ENCODE measurements at regions of chr11 and their contacts with region 1.

Region 1: GRCh38 chr11:107457558-107458271 is at the start of gene CWF19L2:
- DNase-seq: peak; percentile 94
- ATAC-seq: peak; percentile 96
- H3K4me3 ChIP-seq: peak within 1 kb of the TSS; percentile 65 to 99 (median 94)
- H3K4me3 Mint-ChIP-seq: peak within 1 kb of the TSS; percentile 94
- H3K27ac ChIP-seq: peak within 1 kb of the TSS; percentile 64 to 88
- H3K27ac Mint-ChIP-seq: peak within 1 kb of the TSS; percentile 93
- H3K4me1 ChIP-seq: peaks cover 12 to 14% of the 10 kb centered on the region in 2 donors
- H3K4me1 Mint-ChIP-seq: peaks cover 27% of the 10 kb centered on the region
- H3K27me3 ChIP-seq: no peaks in the 10 kb centered on the region
- H3K27me3 Mint-ChIP-seq: peaks cover 5% of the 10 kb centered on the region
- CTCF ChIP-seq: no peak
- total RNA-seq, gene CWF19L2: 44.3 and 44.6 TPM in 2 replicates

Region 2: GRCh38 chr11:106076919-106077608 is 1380.7 kb before region 1 on chr11 and contains the start of gene KBTBD3:
- CTCF ChIA-PET with region 1: no interaction called
- POLR2A ChIA-PET with region 1: no interaction called
- intact Hi-C with region 1: loop called (anchors 1 kb)
- DNase-seq: peak; percentile 99
- ATAC-seq: peak; percentile 91
- H3K4me3 ChIP-seq: peak within 1 kb of the TSS; percentile 72 to 96 (median 77)
- H3K4me3 Mint-ChIP-seq: peak within 1 kb of the TSS; percentile 100
- H3K27ac ChIP-seq: peak within 1 kb of the TSS; percentile 92 to 93
- H3K27ac Mint-ChIP-seq: peak within 1 kb of the TSS; percentile 99
- H3K4me1 ChIP-seq: peaks cover 12 to 23% of the 10 kb centered on the region in 2 donors
- H3K4me1 Mint-ChIP-seq: peaks cover 48% of the 10 kb centered on the region
- H3K27me3 ChIP-seq: no peaks in the 10 kb centered on the region
- H3K27me3 Mint-ChIP-seq: no peaks in the 10 kb centered on the region
- CTCF ChIP-seq: peak; percentile 73
- total RNA-seq, gene KBTBD3: 15.5 and 18.3 TPM in 2 replicates

Region 3: DNA sequence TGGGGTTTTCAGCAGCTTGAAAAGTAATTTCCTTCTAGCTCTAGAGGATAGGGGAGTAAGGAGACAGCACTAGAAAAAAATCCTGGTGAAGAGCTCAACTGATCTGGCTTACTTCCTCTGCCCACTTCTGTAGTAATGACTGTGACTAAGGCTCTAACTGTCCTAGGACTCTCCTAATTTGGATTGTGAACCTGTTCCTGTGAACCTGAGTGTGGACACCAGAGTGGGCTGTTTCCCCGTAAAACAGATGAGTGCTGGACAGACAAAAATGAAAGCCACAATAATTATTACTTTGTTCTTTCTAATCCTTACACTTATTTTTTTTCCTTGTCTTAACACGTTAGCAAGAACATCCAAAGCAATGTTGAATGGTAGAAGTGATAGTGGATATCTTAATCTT is 1226.1 kb before region 1 on chr11:
- CTCF ChIA-PET with region 1: no interaction called
- POLR2A ChIA-PET with region 1: no interaction called
- intact Hi-C with region 1: no loop called
- DNase-seq: no peak
- ATAC-seq: no peak
- H3K4me3 ChIP-seq: no peak overlapping the region
- H3K4me3 Mint-ChIP-seq: no peak overlapping the region
- H3K27ac ChIP-seq: no peak overlapping the region
- H3K27ac Mint-ChIP-seq: no peak overlapping the region
- H3K4me1 ChIP-seq: no peaks in the 10 kb centered on the region
- H3K4me1 Mint-ChIP-seq: no peaks in the 10 kb centered on the region
- H3K27me3 ChIP-seq: no peaks in the 10 kb centered on the region
- H3K27me3 Mint-ChIP-seq: no peaks in the 10 kb centered on the region
- CTCF ChIP-seq: no peak

Region 4: DNA sequence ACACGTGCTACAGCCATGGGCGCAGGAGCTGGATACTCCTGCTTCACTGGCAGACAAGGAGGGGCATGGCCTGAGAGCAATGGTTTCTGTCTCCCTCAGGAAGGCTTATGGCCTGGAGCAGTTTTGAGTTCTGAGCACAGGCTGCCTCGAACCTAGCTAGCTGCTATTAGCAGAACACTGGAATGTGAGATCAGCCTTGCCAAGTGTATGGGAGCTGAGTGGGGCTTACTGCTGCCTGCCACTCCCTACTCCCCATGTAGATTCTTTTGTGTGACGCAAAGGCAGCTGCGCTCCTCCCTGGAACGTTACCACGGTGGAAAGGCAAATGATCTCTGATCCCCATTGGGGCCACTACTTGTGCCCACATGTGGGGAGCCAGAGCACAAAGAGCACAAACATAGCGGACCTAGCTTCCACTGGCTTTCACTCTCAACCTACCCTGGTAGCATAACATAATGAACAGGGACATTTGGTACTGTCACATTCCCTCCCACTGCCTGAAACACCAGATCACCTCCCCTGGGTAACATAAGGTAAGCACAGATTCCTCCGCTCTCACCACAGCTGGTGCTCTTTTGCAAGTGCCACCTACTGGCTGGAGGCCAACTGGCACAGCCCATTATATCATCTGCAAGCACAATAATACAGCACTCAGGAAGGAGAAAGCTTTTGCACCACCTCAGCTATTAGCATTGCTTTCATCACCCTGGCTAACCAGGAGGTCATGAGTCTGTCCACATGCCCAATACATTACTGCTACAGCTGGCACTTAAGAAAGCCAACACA is 354.8 kb before region 1 on chr11:
- CTCF ChIA-PET with region 1: no interaction called
- POLR2A ChIA-PET with region 1: no interaction called
- intact Hi-C with region 1: no loop called
- DNase-seq: no peak
- ATAC-seq: no peak
- H3K4me3 ChIP-seq: no peak overlapping the region
- H3K4me3 Mint-ChIP-seq: no peak overlapping the region
- H3K27ac ChIP-seq: no peak overlapping the region
- H3K27ac Mint-ChIP-seq: no peak overlapping the region
- H3K4me1 ChIP-seq: no peaks in the 10 kb centered on the region
- H3K4me1 Mint-ChIP-seq: no peaks in the 10 kb centered on the region
- H3K27me3 ChIP-seq: no peaks in the 10 kb centered on the region
- H3K27me3 Mint-ChIP-seq: no peaks in the 10 kb centered on the region
- CTCF ChIP-seq: no peak

Region 5: DNA sequence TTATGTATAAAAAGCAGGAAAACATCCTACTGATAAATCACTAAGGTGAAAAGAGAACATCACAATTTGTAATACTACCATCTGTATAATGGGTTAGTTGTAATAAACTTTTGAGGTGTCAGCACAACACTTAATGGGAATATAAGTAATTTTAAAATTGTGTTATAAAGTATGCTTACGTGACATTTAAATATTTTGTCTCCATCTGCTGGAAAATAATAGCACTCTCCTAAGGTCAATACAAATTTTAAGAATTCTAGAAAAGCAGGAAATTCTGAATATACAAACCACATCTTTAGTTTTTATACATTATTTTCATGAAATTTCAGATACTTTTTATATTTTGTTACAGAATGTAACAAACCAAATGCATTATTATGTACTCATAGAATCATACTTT is 19.6 kb before region 1 on chr11:
- CTCF ChIA-PET with region 1: no interaction called
- POLR2A ChIA-PET with region 1: no interaction called
- intact Hi-C with region 1: no loop called
- DNase-seq: no peak
- ATAC-seq: no peak
- H3K4me3 ChIP-seq: no peak overlapping the region
- H3K4me3 Mint-ChIP-seq: no peak overlapping the region
- H3K27ac ChIP-seq: no peak overlapping the region
- H3K27ac Mint-ChIP-seq: no peak overlapping the region
- H3K4me1 ChIP-seq: no peaks in the 10 kb centered on the region
- H3K4me1 Mint-ChIP-seq: peaks cover 2% of the 10 kb centered on the region
- H3K27me3 ChIP-seq: no peaks in the 10 kb centered on the region
- H3K27me3 Mint-ChIP-seq: no peaks in the 10 kb centered on the region
- CTCF ChIP-seq: no peak